Activated CD8-positive, alpha-beta T cell treated with anti-CD3 and anti-CD28 coated beads, Interleukin-2, amount 10 ng/mL, durations not matched to agents 7 days and 5 days (primary cell): ENCODE measurements at regions of chr9 and their contacts with region 1.

Region 1: GRCh38 chr9:109817846-109818472 is 38.0 kb downstream of the PALM2AKAP2 start:
- DNase-seq: peak; percentile 65
- ATAC-seq: peak; percentile 58
- H3K4me3 Mint-ChIP-seq: no peak overlapping the region
- H3K27ac Mint-ChIP-seq: no peak overlapping the region
- H3K4me1 Mint-ChIP-seq: peaks cover 2% of the 10 kb centered on the region
- H3K27me3 Mint-ChIP-seq: peaks cover 6% of the 10 kb centered on the region

Region 2: GRCh38 chr9:109574068-109574882 is 243.7 kb before region 1 on chr9:
- CTCF ChIA-PET with region 1: interaction called, 24 read pairs
- POLR2A ChIA-PET with region 1: no interaction called
- DNase-seq: peak; percentile 44
- ATAC-seq: no peak
- H3K4me3 Mint-ChIP-seq: no peak overlapping the region
- H3K27ac Mint-ChIP-seq: no peak overlapping the region
- H3K4me1 Mint-ChIP-seq: no peaks in the 10 kb centered on the region
- H3K27me3 Mint-ChIP-seq: peaks cover 10% of the 10 kb centered on the region

Region 3: GRCh38 chr9:109805050-109805449 is 12.9 kb before region 1 on chr9:
- CTCF ChIA-PET with region 1: interaction called, 11 read pairs
- POLR2A ChIA-PET with region 1: no interaction called
- DNase-seq: no peak
- ATAC-seq: no peak
- H3K4me3 Mint-ChIP-seq: no peak overlapping the region
- H3K27ac Mint-ChIP-seq: no peak overlapping the region
- H3K4me1 Mint-ChIP-seq: no peaks in the 10 kb centered on the region
- H3K27me3 Mint-ChIP-seq: peaks cover 5% of the 10 kb centered on the region

Region 4: DNA sequence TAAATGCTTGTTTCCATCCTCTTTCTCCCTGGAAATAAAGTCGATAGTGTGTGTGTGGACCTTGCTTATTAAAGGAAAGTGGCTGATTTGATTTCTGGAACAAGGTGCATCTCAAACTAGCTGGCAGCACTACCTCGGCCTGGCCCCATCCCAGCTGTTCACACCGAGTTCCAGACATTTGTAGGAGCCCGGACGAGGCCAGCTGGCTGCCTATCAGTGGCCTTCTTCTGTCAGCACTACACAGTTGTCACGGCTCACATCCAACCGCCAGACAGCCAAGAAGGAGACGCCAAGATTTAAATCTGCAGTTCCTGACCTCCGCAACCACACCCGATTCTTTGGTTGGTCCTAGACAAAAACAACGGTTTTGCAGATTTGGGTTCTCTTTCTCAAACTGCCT is 25.7 kb after region 1 on chr9:
- CTCF ChIA-PET with region 1: no interaction called
- POLR2A ChIA-PET with region 1: no interaction called
- DNase-seq: no peak
- ATAC-seq: no peak
- H3K4me3 Mint-ChIP-seq: no peak overlapping the region
- H3K27ac Mint-ChIP-seq: no peak overlapping the region
- H3K4me1 Mint-ChIP-seq: no peaks in the 10 kb centered on the region
- H3K27me3 Mint-ChIP-seq: no peaks in the 10 kb centered on the region